ENCODE measurements at regions of chr14 and their contacts with region 1.

Region 1: DNA sequence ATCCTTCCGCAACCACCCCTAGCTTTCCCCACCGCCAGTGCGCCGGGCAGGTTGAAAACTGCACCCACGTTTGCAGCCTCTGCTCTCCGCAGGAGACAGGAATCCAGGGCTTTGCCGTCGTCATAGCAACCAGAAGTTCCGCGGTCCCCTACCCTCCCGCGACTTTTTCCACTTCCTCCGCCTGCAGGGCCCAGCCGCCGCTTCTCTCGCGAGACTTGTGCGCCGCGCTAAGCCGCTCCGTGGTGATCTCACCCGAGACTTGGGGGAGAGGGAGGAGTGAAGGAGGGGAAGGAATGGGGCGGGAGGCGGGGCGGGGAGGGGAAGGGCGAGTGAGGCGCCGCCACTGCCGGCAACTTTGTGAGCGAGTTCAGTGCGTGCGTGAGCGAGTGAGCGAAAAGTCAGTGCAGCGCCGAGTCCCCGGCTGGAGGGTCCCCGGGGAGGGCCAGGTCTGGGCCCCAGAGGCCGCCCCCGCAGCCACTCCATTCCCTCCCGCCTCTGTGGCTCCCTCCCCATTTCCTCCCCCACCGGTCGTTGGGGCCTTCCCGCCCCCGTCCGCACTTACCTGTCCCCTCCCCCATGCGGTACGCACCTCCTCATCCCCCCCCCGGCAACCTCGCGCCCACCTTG is 413.0 kb downstream of the PCNX1 start:
- DNase-seq: peak; percentile 99
- ATAC-seq: peak; percentile 79
- H3K4me3 ChIP-seq: peak within 1 kb of the TSS; percentile 78
- H3K27ac ChIP-seq: peak within 1 kb of the TSS; percentile 90
- H3K4me1 ChIP-seq: peaks cover 26% of the 10 kb centered on the region
- H3K27me3 ChIP-seq: no peaks in the 10 kb centered on the region
- CTCF ChIP-seq: no peak

Region 2: GRCh38 chr14:71166180-71166790 is 153.9 kb before region 1 on chr14:
- CTCF ChIA-PET with region 1: interaction called, 10 read pairs
- POLR2A ChIA-PET with region 1: no interaction called
- intact Hi-C with region 1: loop called (anchors 1 kb)
- DNase-seq: peak; percentile 79
- ATAC-seq: peak; percentile 68
- H3K4me3 ChIP-seq: no peak overlapping the region
- H3K27ac ChIP-seq: no peak overlapping the region
- H3K4me1 ChIP-seq: no peaks in the 10 kb centered on the region
- H3K27me3 ChIP-seq: no peaks in the 10 kb centered on the region
- CTCF ChIP-seq: peak; percentile 80

Region 3: DNA sequence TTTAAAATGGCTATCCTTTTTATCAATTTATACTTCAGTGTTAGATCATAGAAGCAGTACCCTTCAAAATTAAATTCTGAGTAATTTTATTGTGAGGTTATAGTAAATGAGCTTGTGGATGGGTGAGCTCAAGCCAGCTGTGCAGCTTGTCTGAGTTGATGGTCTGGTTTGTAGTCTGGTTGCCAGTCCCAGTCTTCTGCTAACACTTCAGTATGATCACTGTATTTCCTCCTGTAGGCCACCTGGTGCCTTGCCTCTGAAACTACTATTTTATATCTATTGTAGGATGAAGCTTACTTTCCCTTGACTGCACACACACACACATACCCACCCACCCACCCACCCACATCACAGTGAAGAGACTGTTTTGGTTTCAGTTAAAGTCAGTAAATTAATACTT is 83.4 kb after region 1 on chr14:
- CTCF ChIA-PET with region 1: interaction called, 12 read pairs
- POLR2A ChIA-PET with region 1: no interaction called
- intact Hi-C with region 1: loop called (anchors 1 kb)
- DNase-seq: peak; percentile 51
- ATAC-seq: peak; percentile 85
- H3K4me3 ChIP-seq: no peak overlapping the region
- H3K27ac ChIP-seq: no peak overlapping the region
- H3K4me1 ChIP-seq: peaks cover 16% of the 10 kb centered on the region; the same call in 1 of the 2 replicates
- H3K27me3 ChIP-seq: no peaks in the 10 kb centered on the region
- CTCF ChIP-seq: 0 out of 2 replicates have a peak, but pooled peaks have one; percentile 23

Region 4: DNA sequence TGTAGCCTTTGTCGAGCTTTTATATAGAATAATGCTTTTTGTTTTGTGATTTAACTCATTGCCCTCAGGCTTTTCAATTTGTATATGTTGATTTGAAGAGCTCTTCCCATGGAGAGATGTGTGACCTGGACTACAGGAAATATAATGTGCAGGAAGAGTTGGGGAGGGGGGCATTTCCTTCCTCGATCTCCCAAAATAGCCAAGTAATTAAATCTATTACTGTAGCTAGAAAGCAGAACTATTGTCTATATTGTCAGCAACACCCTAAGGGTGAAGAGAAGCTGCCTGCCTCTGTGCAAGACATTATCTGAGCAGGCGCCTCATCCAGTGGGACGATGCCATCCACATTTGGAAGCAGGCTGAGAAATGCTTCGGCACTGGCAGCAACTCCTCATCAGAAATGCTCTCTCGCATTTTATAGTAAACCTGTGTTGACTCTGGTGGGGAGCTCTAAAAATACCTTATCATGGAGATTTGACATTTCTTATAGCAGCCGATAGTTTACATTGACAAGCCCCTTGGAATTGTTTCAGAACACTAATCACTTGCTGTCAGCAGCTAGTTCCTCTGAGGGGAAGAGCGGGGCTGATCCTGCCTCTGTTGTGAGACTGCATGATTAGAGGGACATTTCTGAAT is 219.5 kb after region 1 on chr14:
- CTCF ChIA-PET with region 1: interaction called, 3 read pairs
- POLR2A ChIA-PET with region 1: no interaction called
- intact Hi-C with region 1: loop called (anchors 5 kb)
- DNase-seq: no peak
- ATAC-seq: no peak
- H3K4me3 ChIP-seq: no peak overlapping the region
- H3K27ac ChIP-seq: no peak overlapping the region
- H3K4me1 ChIP-seq: no peaks in the 10 kb centered on the region
- H3K27me3 ChIP-seq: no peaks in the 10 kb centered on the region
- CTCF ChIP-seq: no peak

Region 5: GRCh38 chr14:71651228-71651627 is 331.0 kb after region 1 on chr14:
- CTCF ChIA-PET with region 1: no interaction called
- POLR2A ChIA-PET with region 1: no interaction called
- intact Hi-C with region 1: loop called (anchors 2 kb)
- DNase-seq: peak; percentile 73
- ATAC-seq: peak; percentile 60
- H3K4me3 ChIP-seq: no peak overlapping the region
- H3K27ac ChIP-seq: peak overlapping the region; percentile 31
- H3K4me1 ChIP-seq: peaks cover 50% of the 10 kb centered on the region
- H3K27me3 ChIP-seq: no peaks in the 10 kb centered on the region
- CTCF ChIP-seq: no peak

Region 6: DNA sequence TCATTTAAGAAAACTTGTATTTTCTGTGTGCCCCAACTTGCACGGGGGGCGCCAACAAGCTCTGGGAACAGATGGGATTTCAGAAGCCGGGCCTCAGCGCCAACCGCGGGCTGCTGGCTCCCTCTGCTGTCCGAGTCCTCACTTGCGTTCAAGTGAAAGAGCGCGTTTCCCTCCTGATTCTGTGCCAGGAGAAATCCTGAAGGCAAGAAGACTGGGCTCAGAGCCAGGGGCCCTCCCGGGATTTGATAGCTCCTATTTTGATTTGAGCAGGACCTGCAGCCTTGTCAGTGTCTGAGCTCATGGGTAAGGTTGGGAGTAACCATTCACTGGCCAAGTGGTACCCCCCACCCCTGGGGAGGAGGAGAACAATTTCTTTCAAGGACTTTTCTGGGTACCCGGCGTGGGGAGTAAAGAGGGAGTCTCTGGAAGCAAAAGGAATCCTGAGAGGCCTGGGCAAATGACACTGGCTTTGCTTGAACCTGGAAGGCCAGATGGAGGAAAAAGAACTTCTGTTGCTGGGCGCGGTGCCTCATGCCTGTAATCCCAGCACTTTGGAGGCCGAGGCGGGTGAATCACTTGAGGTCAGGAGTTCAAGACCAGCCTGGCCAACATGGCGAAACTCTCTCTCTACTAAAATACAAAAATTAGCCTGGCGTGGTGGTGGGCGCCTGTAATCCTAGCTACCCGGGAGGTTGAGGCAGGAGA is 433.1 kb after region 1 on chr14:
- CTCF ChIA-PET with region 1: interaction called, 3 read pairs
- POLR2A ChIA-PET with region 1: no interaction called
- intact Hi-C with region 1: loop called (anchors 1 kb)
- DNase-seq: peak; percentile 94
- ATAC-seq: peak; percentile 85
- H3K4me3 ChIP-seq: peak overlapping the region; percentile 46; the same call in 1 of the 2 replicates
- H3K27ac ChIP-seq: no peak overlapping the region
- H3K4me1 ChIP-seq: peaks cover 5% of the 10 kb centered on the region
- H3K27me3 ChIP-seq: no peaks in the 10 kb centered on the region
- CTCF ChIP-seq: peak; percentile 98

Measured in PC-3 (cell line).